ENCODE measurements at regions of chrX and their contacts with region 1.

Region 1: DNA sequence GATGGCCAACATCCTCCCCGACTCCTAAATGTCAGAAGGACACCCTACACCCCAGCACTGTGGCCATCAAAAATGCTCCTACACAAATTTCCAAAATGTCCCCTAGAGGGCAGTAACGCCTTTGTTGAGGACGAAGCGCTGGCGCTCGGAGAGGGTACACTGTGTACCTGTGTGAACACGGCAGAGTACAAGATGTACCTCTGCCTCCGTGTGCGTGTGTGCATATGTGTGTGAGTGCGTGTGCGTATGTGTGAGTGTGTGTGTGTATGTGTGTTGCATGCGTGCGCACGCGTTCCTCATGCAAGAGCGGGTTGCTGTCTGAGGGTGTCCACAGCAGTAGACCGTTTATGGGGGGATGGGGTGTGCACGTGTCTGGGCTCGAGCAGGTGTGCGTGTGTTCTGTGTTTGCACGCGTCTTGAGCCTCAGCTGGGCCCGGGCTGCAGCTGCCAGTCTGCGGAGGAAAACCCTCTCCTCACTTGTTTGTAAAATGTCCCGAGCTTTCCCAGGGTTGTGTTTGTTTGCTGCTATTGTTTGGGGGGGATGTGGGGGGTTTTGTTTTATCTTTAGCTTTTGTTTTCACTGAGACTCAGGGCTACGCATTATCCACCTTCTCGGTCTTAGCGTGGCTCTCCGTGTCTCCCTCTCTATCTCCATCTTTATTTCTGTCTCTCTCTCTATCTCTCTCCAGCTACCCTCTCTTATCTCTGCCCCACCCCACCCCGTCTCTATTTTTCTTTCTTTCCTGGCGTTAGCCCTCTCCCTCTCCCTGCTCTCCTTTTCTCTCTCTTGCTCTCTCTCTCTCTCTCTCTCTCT is 10.4 kb upstream of the TSPYL2 start:
- DNase-seq: peak; percentile 48 to 81 (median 52)
- ATAC-seq: peak; percentile 89
- H3K4me3 ChIP-seq: peak overlapping the region; percentile 34
- H3K27ac ChIP-seq: no peak overlapping the region
- H3K4me1 ChIP-seq: peaks cover 0 to 12% of the 10 kb centered on the region in 2 experiments; a peak in 3 of 5 replicates
- H3K27me3 ChIP-seq: no peaks in the 10 kb centered on the region
- CTCF ChIP-seq: peak; percentile 74 to 78 (median 75)
- EP300 ChIP-seq: no peak
- POLR2A ChIP-seq: no peak
- RAD21 ChIP-seq: peak; percentile 34 to 63

Region 2: GRCh38 chrX:52585892-52586291 is 485.9 kb before region 1 on chrX:
- CTCF ChIA-PET with region 1: no interaction called
- POLR2A ChIA-PET with region 1: no interaction called
- in situ Hi-C with region 1: no loop called
- intact Hi-C with region 1: no loop called
- DNase-seq: no peak
- ATAC-seq: no peak
- H3K4me3 ChIP-seq: no peak overlapping the region
- H3K27ac ChIP-seq: no peak overlapping the region
- H3K4me1 ChIP-seq: no peaks in the 10 kb centered on the region
- H3K27me3 ChIP-seq: peaks cover 0 to 7% of the 10 kb centered on the region in 2 experiments; a peak in 2 of 5 replicates
- CTCF ChIP-seq: no peak
- EP300 ChIP-seq: no peak
- POLR2A ChIP-seq: no peak
- RAD21 ChIP-seq: no peak

Region 3: GRCh38 chrX:53089224-53089842 is 17.5 kb after region 1 on chrX:
- CTCF ChIA-PET with region 1: interaction called, 7 read pairs
- POLR2A ChIA-PET with region 1: no interaction called
- in situ Hi-C with region 1: no loop called
- intact Hi-C with region 1: loop called (anchors 1 kb)
- DNase-seq: peak; percentile 38 to 59 (median 44)
- ATAC-seq: no peak
- H3K4me3 ChIP-seq: no peak overlapping the region
- H3K27ac ChIP-seq: no peak overlapping the region
- H3K4me1 ChIP-seq: peaks cover 4 to 5% of the 10 kb centered on the region in 2 experiments; a peak in 2 of 5 replicates
- H3K27me3 ChIP-seq: no peaks in the 10 kb centered on the region; a peak in 1 of 5 replicates
- CTCF ChIP-seq: peak; percentile 65 to 70 (median 67)
- EP300 ChIP-seq: no peak
- POLR2A ChIP-seq: no peak
- RAD21 ChIP-seq: peak; percentile 20 to 46; a peak in 3 of 4 replicates

Region 4: DNA sequence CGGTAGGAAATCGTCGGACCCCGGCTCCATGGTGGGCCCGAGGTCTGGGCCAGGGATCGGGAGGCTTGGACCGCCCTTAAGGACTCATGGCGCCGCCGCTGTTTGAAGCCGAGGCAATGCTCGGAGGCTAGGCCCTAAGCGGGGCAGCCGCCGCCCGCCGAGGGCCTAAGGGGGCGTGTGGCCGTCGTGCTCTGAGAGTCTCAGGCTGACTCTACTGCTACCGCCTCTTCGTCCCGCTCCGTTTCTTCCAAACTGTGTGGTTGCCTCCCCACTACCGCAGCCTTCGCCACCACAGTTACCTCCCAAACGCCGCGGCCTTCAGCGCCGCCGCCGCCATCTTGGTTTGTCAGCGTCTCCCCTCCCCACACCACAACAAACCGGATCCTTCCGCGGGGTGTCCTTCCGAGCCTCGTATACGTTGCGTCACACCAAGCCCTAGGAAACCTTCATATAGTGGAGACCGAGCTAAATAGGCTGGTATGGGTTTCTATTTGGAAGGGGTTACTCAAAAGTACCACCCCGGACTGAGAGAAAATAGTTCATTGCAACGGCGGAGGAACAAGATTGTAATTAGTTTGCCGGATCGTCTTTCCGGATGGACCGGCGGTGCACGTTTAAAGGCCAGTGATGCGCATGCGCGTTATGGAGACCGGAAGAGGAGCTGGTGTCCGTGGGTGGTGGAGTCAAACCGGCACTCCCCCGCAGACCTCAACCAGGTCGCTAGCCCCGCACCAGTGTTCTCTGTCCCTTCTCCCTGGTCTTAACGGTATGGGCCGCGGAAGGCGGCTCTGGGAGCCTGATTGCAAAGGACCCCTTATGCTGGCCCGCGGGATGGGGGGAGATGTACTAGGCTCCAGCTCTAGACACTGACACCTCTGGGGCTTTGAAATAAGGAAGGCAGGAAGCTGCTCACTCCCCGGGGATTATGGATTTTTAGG is 153.3 kb after region 1 on chrX and contains the start of gene KDM5C:
- CTCF ChIA-PET with region 1: no interaction called
- POLR2A ChIA-PET with region 1: no interaction called
- in situ Hi-C with region 1: no loop called
- intact Hi-C with region 1: loop called (anchors 10 kb)
- DNase-seq: peak; percentile 95 to 97 (median 96)
- ATAC-seq: peak; percentile 84
- H3K4me3 ChIP-seq: peak within 1 kb of the TSS; percentile 100
- H3K27ac ChIP-seq: peak within 1 kb of the TSS; percentile 100
- H3K4me1 ChIP-seq: peaks cover 17 to 24% of the 10 kb centered on the region in 2 experiments; a peak in 4 of 5 replicates
- H3K27me3 ChIP-seq: no peaks in the 10 kb centered on the region
- CTCF ChIP-seq: no peak
- EP300 ChIP-seq: 0 out of 2 replicates have a peak, but pooled peaks have one; percentile 26
- POLR2A ChIP-seq: peak; percentile 90
- RAD21 ChIP-seq: 0 out of 4 replicates have a peak, but pooled peaks of 1 of the 2 experiments have one; percentile 10
- polyA plus RNA-seq, gene KDM5C: 0.62 to 0.83 TPM

Measured in K562 (cell line).